WTC11 (cell line): ENCODE measurements at regions of chr4 and their contacts with region 1.

Region 1: DNA sequence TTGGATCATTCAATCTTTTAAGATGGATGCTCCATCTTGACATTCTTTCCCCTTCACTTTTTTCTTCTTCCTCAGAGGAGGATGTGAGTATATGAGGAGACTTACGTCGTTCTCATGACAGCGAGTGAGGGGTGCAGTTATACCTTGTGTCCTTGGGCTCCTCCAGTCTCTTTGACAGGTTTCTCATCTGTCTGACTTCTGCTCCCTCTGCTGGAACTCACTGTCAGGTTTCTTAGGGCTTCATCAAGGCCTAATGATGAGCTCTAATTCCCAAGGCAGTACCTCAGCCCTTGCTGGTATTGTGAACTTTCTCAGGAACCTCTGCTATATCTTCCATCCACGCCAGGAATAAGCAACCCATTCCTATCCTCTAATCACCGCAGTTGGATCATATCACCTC is 237.8 kb upstream of the ADGRL3 start:
- DNase-seq: no peak
- ATAC-seq: peak; percentile 88
- H3K4me3 Mint-ChIP-seq: no peak overlapping the region
- H3K27ac Mint-ChIP-seq: no peak overlapping the region
- H3K4me1 Mint-ChIP-seq: no peaks in the 10 kb centered on the region
- H3K27me3 Mint-ChIP-seq: no peaks in the 10 kb centered on the region
- CTCF ChIP-seq: no peak

Region 2: DNA sequence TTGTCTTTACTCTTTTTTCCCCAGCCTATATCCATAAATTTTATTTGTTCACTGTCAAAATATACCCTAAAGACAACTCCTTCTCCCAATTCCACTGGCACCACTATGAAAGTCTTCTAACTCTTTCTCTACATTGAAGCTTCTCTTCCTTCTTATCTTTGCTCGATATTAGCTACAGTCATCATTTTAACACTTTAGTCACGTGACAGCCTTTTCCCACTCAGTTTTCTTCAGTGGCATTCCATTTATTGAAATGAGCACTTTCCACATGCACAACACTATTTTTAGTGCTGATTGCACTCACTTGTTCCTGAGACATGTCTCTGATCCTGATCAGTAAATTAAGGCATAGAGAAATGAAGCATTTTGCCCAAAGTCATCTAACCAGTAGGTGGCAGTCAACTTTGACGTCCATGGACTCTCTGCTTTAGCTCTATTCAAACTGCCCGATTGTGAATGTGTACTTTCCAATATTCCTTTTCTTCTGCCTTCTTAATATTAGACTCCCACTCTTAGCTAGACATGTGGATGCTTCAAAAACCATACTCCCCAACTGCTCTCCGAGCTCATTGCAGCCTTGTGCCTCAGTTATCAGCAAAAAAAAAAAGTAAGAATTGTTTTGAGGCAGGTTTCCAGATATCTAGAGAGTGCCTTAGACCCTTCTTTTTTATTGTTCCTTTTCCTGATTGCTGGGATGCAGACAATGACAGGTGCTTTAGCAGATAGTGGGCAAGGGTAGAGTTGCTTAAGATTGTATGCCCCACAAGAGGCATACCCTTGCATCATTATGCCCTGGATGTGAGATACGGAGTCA is 156.6 kb before region 1 on chr4:
- CTCF ChIA-PET with region 1: interaction called, 10 read pairs
- POLR2A ChIA-PET with region 1: no interaction called
- DNase-seq: no peak
- ATAC-seq: peak; percentile 83
- H3K4me3 Mint-ChIP-seq: no peak overlapping the region
- H3K27ac Mint-ChIP-seq: no peak overlapping the region
- H3K4me1 Mint-ChIP-seq: no peaks in the 10 kb centered on the region
- H3K27me3 Mint-ChIP-seq: no peaks in the 10 kb centered on the region
- CTCF ChIP-seq: 0 out of 2 replicates have a peak, but pooled peaks have one; percentile 30

Region 3: DNA sequence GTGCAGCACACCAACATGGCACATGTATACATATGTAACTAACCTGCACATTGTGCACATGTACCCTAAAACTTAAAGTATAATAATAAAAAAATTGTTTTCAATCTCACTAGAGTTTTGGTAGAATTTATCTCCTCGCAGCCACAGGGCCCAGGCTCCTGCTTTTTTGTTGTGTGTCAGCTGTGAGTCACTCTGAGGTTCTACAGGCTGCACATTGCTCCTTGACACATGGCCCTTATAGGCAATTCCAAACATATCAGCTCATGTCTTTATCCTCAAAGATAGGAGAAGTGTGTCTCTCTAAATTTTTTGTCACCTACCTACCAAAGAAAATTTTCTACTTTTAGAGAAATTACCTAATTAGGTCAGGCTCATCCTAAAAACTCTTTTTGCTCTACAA is 14.3 kb before region 1 on chr4:
- CTCF ChIA-PET with region 1: no interaction called
- POLR2A ChIA-PET with region 1: no interaction called
- DNase-seq: no peak
- ATAC-seq: no peak
- H3K4me3 Mint-ChIP-seq: no peak overlapping the region
- H3K27ac Mint-ChIP-seq: no peak overlapping the region
- H3K4me1 Mint-ChIP-seq: no peaks in the 10 kb centered on the region
- H3K27me3 Mint-ChIP-seq: no peaks in the 10 kb centered on the region
- CTCF ChIP-seq: no peak

Region 4: GRCh38 chr4:60989146-60989545 is 26.9 kb after region 1 on chr4:
- CTCF ChIA-PET with region 1: no interaction called
- POLR2A ChIA-PET with region 1: no interaction called
- DNase-seq: no peak
- ATAC-seq: no peak
- H3K4me3 Mint-ChIP-seq: no peak overlapping the region
- H3K27ac Mint-ChIP-seq: no peak overlapping the region
- H3K4me1 Mint-ChIP-seq: no peaks in the 10 kb centered on the region
- H3K27me3 Mint-ChIP-seq: no peaks in the 10 kb centered on the region
- CTCF ChIP-seq: no peak